Transverse colon (tissue), 4 donors: ENCODE measurements at regions of chr10 and their contacts with region 1.

Region 1: DNA sequence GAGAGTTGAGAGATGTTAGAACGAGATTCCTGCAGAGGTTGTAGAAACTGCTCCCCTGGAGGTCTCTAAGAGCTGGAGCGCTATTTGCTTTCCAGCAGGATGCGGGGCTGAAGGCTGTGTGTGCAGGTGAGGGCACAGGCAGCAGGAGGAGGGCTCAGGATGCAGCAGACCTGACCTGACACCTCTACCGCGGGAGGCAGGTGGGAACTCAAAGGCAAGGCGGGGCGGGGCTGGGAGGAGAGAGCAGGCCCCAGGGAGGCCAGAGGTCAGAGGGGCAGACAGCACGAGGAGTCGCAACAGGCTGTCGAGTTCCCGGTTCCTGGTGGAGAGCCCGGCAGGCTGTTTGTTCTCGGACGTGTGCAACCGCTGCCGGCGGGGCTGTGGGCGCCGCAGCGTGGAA is 7.9 kb upstream of the CRTAC1 start:
- DNase-seq: no peak
- H3K4me3 ChIP-seq: no peak overlapping the region
- H3K27ac ChIP-seq: no peak overlapping the region
- H3K4me1 ChIP-seq: no peaks in the 10 kb centered on the region
- H3K27me3 ChIP-seq: peaks cover 85% of the 10 kb centered on the region
- CTCF ChIP-seq: no peak
- EP300 ChIP-seq: no peak
- POLR2A ChIP-seq: no peak

Region 2: GRCh38 chr10:97830064-97830463 is 208.2 kb before region 1 on chr10:
- in situ Hi-C with region 1: no loop called
- intact Hi-C with region 1: no loop called
- DNase-seq: no peak
- H3K4me3 ChIP-seq: no peak overlapping the region
- H3K27ac ChIP-seq: no peak overlapping the region
- H3K4me1 ChIP-seq: no peaks in the 10 kb centered on the region
- H3K27me3 ChIP-seq: no peaks in the 10 kb centered on the region
- CTCF ChIP-seq: no peak
- EP300 ChIP-seq: no peak
- POLR2A ChIP-seq: no peak

Region 3: DNA sequence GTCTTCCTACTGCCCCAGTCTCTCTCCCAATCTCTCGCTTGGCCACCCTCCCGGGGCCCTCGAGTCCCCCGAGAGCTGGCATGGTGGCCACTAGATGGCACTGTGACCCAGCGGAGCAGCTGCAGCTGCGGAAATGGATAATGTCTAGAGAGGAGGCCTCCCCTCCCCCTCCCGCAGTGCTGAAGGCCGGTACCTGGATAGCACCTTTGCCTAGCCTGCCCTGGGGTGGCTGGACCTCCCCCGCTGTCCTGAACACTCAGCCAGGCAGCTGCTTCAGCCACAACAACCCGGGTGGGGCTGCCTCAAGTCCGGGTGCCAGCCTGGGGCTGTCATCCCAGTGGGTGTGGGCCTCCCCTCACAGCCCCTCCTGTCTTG is 123.5 kb before region 1 on chr10:
- in situ Hi-C with region 1: loop called (anchors 5 to 25 kb)
- intact Hi-C with region 1: loop called (anchors 2 kb)
- DNase-seq: peak; percentile 78
- H3K4me3 ChIP-seq: no peak overlapping the region
- H3K27ac ChIP-seq: no peak overlapping the region
- H3K4me1 ChIP-seq: peaks cover 0 to 2% (median 0%) of the 10 kb centered on the region in 4 donors
- H3K27me3 ChIP-seq: peaks cover 12% of the 10 kb centered on the region
- CTCF ChIP-seq: peak; percentile 73 to 91 (median 86)
- EP300 ChIP-seq: no peak
- POLR2A ChIP-seq: no peak

Region 4: DNA sequence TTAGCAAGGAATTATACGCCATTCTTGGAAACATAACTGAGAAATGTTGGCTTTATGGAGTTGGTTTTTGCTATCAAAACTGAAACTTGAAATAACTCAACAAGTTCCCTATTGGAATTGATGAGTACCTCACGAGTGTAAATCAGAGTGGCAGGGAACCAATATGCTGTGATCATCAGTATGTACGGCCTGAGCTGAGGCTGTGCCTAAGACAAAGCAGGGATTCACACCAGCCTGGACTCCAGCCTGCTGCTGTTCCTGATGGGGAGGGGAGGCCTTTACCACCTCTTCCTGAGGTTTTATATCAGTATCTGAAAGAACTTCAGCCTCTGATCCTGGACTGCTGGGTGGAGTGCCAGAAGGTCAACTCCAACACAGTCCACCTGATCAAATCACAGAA is 60.6 kb before region 1 on chr10:
- in situ Hi-C with region 1: no loop called
- intact Hi-C with region 1: no loop called
- DNase-seq: no peak
- H3K4me3 ChIP-seq: no peak overlapping the region
- H3K27ac ChIP-seq: no peak overlapping the region
- H3K4me1 ChIP-seq: no peaks in the 10 kb centered on the region
- H3K27me3 ChIP-seq: peaks cover 87% of the 10 kb centered on the region
- CTCF ChIP-seq: no peak
- EP300 ChIP-seq: no peak
- POLR2A ChIP-seq: no peak